Colonic mucosa (tissue), 4 donors: ENCODE measurements at regions of chr9 and their contacts with region 1.

Region 1: DNA sequence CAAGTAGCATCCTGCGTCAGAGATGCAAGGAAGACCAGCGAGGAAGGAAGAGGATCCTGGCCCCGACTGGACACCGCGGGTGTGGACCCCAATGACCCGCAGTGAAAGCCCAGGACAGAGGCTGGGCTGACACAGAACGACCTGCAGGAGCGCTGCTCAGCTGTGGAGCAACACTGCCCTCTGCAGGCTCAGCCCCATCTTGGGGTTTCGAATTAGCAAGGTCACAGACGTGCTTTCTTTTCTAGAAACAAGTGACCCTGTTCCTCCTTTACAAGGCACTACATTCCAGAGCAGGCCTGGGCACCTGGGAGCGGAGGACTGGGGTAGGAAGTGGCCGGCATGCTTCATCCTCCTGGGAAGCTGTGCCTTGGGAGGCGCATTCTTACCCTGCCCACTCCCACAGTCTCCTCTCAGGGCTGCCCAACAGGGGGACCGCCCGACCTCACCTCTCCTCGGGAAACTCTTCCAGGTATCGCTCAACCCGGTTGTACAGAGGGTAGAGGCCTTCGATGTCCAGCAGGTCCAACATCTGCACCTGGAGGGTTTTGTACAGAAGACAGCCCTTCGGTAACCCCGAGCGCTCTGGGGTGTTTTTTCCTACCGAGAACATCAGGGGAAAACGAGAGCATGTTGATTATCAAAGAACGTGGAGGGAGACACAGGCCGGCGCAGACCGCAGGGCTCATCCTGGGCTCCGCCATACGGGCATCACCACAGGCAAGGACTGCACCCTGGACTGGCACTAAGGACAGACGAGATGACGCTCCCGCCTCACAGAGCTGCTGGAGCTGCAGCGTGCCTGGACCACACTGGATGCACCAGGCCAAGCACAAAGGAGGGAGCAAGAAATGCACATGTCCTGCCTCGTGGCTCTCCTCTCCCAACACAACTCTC is 35.0 kb downstream of the IPPK start:
- DNase-seq: peak; percentile 75
- H3K4me3 ChIP-seq: no peak overlapping the region
- H3K27ac ChIP-seq: no peak overlapping the region
- H3K4me1 ChIP-seq: no peaks in the 10 kb centered on the region
- H3K27me3 ChIP-seq: no peaks in the 10 kb centered on the region
- CTCF ChIP-seq: peak; percentile 85

Region 2: GRCh38 chr9:92133949-92134604 is 500.9 kb before region 1 on chr9:
- intact Hi-C with region 1: loop called (anchors 10 kb)
- DNase-seq: peak; percentile 74
- H3K4me3 ChIP-seq: no peak overlapping the region
- H3K27ac ChIP-seq: no peak overlapping the region
- H3K4me1 ChIP-seq: no peaks in the 10 kb centered on the region
- H3K27me3 ChIP-seq: no peaks in the 10 kb centered on the region
- CTCF ChIP-seq: peak; percentile 94

Region 3: DNA sequence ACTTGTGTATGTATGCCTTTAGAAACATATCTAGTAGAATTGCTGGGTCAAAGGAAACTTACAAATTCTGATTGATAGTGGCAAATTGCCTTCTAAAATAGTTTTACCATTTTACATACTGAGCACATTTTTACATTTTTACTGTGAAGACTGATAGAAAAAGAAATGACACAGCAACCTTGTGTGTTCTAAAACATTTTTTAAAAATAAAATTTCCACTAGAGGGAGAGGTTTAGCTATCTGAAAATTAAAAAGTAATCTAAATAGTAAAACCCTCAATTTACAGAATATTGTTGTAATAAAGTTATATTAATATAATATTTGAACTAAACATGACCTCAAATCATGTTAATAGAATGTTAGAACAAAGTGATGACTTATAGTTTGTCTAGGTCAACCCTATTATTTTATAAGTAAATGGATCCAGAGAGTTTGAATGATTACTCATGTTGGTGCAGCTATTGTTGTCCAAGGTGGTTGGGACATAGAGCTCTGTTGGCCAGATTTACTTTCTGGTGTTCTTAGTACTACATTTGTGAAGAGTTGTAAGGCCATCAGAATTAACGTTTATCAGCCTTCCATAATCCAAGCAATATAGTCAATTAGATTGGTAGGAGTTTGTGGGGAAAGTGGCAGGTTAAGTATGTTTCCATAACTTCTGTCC is 292.0 kb before region 1 on chr9:
- intact Hi-C with region 1: loop called (anchors 10 kb)
- DNase-seq: no peak
- H3K4me3 ChIP-seq: no peak overlapping the region
- H3K27ac ChIP-seq: no peak overlapping the region
- H3K4me1 ChIP-seq: no peaks in the 10 kb centered on the region
- H3K27me3 ChIP-seq: no peaks in the 10 kb centered on the region
- CTCF ChIP-seq: no peak

Region 4: DNA sequence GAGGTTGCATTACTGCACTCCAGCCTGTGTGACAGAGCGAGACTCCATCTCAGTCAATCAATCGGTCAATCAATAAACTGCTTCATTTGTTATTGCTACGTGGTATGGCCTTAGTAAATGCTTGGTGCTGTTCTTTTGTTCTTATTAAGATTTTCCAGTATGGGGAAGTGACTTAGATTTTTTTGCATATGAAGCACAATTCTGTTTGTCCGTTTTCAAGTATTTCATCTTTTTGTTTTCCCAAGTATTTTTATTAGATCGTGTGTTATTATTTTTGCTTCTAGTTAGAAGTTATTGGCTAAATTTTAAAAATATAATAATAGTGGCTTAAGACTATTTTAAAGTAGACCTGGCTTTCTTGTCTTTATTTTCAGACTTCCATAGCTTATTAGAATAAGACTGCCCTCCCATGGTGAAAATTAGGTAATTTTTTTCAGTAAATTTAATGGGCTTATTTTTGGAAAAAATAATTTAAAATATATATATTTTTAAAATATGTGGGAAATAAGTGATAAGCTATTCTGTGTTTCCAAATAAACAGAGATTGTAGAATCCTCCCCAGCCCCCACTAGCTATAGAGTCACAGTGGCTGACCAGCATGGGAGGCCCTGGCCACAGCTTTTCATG is 195.9 kb before region 1 on chr9:
- intact Hi-C with region 1: loop called (anchors 5 kb)
- DNase-seq: no peak
- H3K4me3 ChIP-seq: no peak overlapping the region
- H3K27ac ChIP-seq: no peak overlapping the region
- H3K4me1 ChIP-seq: no peaks in the 10 kb centered on the region
- H3K27me3 ChIP-seq: no peaks in the 10 kb centered on the region
- CTCF ChIP-seq: no peak

Region 5: DNA sequence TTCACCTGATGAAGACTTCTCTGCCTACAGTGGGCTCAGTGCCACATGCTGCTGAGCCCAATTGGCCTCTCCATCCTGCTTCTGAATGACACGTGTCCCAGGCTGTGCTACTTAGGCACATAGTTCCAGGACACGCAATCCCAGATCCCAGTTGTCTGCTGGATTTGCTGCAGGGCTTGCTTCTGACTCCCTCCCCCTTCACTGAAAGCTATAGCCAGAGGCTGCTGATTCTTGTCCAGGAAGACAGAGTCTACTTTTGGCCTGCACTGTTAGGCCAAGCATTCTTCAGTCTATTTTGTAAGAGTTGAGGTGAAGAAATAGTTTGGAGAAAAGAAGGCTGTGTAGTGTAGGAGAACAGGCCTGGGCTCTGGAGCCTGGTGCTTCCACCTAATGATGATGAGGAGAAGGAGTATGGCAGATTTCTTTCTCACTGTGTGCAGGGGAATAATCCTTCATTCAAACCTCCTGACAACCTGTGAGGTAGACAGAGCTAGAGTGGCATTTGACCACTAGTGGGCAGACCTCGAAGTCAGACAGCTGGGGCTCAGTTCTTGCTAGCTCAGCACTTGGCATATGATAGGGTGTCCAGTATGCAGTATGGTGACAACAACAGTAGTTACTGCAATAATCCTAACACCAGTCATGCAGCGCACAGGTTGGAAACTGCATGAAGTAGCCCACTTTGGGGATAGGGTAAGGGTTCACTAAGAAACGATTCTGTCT is 133.1 kb before region 1 on chr9:
- intact Hi-C with region 1: loop called (anchors 5 kb)
- DNase-seq: peak; percentile 41
- H3K4me3 ChIP-seq: no peak overlapping the region
- H3K27ac ChIP-seq: no peak overlapping the region
- H3K4me1 ChIP-seq: no peaks in the 10 kb centered on the region
- H3K27me3 ChIP-seq: no peaks in the 10 kb centered on the region
- CTCF ChIP-seq: peak; percentile 43

Region 6: GRCh38 chr9:92747459-92748232 is 112.7 kb after region 1 on chr9:
- intact Hi-C with region 1: no loop called
- DNase-seq: no peak
- H3K4me3 ChIP-seq: no peak overlapping the region
- H3K27ac ChIP-seq: no peak overlapping the region
- H3K4me1 ChIP-seq: peaks cover 4% of the 10 kb centered on the region
- H3K27me3 ChIP-seq: no peaks in the 10 kb centered on the region
- CTCF ChIP-seq: no peak